B cell (primary cell): ENCODE measurements at regions of chr1 and their contacts with region 1.

Region 1: DNA sequence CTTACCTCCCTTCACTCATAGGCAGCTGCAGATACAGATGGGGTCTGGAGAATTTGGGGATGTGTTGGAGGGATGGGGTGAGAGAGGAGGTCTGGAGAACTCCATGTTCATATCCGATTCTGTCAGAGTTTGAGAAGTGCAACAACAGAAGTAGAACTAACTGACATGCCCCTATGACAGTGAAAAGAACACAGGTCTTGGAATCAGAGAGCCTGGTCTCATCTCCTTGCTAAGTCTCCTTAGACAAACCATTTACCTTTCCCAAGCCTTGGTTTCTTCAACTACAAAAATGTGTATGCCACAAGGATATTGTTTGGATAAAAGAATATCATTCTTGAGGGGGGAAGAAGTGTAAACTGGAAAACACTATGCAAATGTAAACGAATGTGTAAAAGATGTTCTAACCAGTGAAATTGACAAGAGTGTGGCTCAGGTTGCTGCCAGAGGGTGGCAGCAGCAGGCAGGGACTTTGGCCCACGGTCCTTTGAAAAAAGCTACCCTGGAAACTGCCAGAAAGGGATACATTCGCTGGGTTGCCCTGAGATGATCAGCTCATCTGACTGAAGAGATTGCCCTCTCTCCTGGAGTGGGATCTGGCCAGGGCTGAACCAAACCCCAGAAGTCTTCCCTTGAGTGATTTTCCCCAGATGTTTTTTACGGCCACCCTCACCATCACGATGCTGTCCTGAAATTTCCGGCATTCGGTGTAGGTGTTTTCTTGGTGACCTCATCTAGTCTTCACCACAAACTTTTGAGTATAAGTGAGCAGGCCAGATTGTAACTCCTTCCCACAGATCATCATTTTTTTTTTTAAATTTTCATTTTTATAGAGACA is 17.0 kb upstream of the CD2 start:
- DNase-seq: peak; percentile 68
- ATAC-seq: peak; percentile 60
- H3K4me3 ChIP-seq: no peak overlapping the region
- H3K4me3 Mint-ChIP-seq: peak overlapping the region; percentile 63
- H3K27ac ChIP-seq: no peak overlapping the region
- H3K27ac Mint-ChIP-seq: peak overlapping the region; percentile 66
- H3K4me1 ChIP-seq: peaks cover 20 to 24% of the 10 kb centered on the region in 2 donors
- H3K4me1 Mint-ChIP-seq: peaks cover 30% of the 10 kb centered on the region
- H3K27me3 ChIP-seq: no peaks in the 10 kb centered on the region
- H3K27me3 Mint-ChIP-seq: no peaks in the 10 kb centered on the region
- CTCF ChIP-seq: peak; percentile 74

Region 2: GRCh38 chr1:116472431-116472961 is 264.7 kb before region 1 on chr1:
- CTCF ChIA-PET with region 1: no interaction called
- POLR2A ChIA-PET with region 1: no interaction called
- intact Hi-C with region 1: no loop called
- DNase-seq: no peak
- ATAC-seq: no peak
- H3K4me3 ChIP-seq: no peak overlapping the region
- H3K4me3 Mint-ChIP-seq: no peak overlapping the region
- H3K27ac ChIP-seq: no peak overlapping the region
- H3K27ac Mint-ChIP-seq: no peak overlapping the region
- H3K4me1 ChIP-seq: no peaks in the 10 kb centered on the region
- H3K4me1 Mint-ChIP-seq: no peaks in the 10 kb centered on the region
- H3K27me3 ChIP-seq: no peaks in the 10 kb centered on the region
- H3K27me3 Mint-ChIP-seq: no peaks in the 10 kb centered on the region
- CTCF ChIP-seq: no peak

Region 3: DNA sequence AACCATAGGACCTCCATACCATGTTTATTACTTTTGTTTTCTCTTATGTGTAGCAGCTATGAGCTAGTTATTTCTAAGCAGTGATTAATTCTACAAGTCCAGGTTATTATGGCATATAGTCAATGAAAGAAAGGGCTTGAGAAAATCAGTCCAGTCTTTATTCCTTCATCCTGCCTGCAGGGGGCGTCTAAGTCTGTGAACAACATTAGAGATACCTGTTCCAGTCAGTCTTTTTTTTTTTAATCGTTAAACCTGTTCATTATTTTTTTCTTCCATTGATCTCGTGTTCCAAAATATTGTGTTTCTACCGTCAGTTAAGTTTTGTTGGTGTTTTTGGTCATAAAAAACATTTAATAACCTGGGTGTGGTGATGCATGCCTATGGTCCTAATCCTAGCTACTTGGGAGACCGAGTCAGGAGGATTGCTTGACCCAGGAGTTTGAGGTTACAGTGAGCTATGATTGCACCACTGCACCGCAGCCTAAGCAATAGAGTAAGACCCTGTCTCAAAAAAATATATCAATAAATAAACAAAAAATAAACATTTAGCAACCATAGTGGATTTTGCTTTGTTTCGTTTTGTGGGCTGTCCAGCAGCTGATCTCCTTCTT is 12.4 kb before region 1 on chr1:
- CTCF ChIA-PET with region 1: interaction called, 12 read pairs
- POLR2A ChIA-PET with region 1: interaction called, 6 read pairs
- intact Hi-C with region 1: no loop called
- DNase-seq: peak; percentile 67
- ATAC-seq: no peak
- H3K4me3 ChIP-seq: no peak overlapping the region
- H3K4me3 Mint-ChIP-seq: no peak overlapping the region
- H3K27ac ChIP-seq: no peak overlapping the region
- H3K27ac Mint-ChIP-seq: no peak overlapping the region
- H3K4me1 ChIP-seq: no peaks in the 10 kb centered on the region
- H3K4me1 Mint-ChIP-seq: peaks cover 7% of the 10 kb centered on the region
- H3K27me3 ChIP-seq: no peaks in the 10 kb centered on the region
- H3K27me3 Mint-ChIP-seq: no peaks in the 10 kb centered on the region
- CTCF ChIP-seq: peak; percentile 89

Region 4: GRCh38 chr1:116817582-116818064 is 80.4 kb after region 1 on chr1:
- CTCF ChIA-PET with region 1: interaction called, 32 read pairs
- POLR2A ChIA-PET with region 1: no interaction called
- intact Hi-C with region 1: loop called (anchors 1 kb)
- DNase-seq: peak; percentile 58
- ATAC-seq: peak; percentile 45
- H3K4me3 ChIP-seq: no peak overlapping the region
- H3K4me3 Mint-ChIP-seq: no peak overlapping the region
- H3K27ac ChIP-seq: no peak overlapping the region
- H3K27ac Mint-ChIP-seq: no peak overlapping the region
- H3K4me1 ChIP-seq: peaks cover 2 to 4% of the 10 kb centered on the region in 2 donors
- H3K4me1 Mint-ChIP-seq: peaks cover 2% of the 10 kb centered on the region
- H3K27me3 ChIP-seq: no peaks in the 10 kb centered on the region
- H3K27me3 Mint-ChIP-seq: no peaks in the 10 kb centered on the region
- CTCF ChIP-seq: peak; percentile 58

Region 5: GRCh38 chr1:117051224-117052064 is 314.2 kb after region 1 on chr1:
- CTCF ChIA-PET with region 1: interaction called, 64 read pairs
- POLR2A ChIA-PET with region 1: no interaction called
- intact Hi-C with region 1: loop called (anchors 1 kb)
- DNase-seq: peak; percentile 52
- ATAC-seq: peak; percentile 31
- H3K4me3 ChIP-seq: peak overlapping the region in 3 of 5 experiments; percentile 8 to 47 (median 28)
- H3K4me3 Mint-ChIP-seq: peak overlapping the region; percentile 79
- H3K27ac ChIP-seq: peak overlapping the region; percentile 37 to 64
- H3K27ac Mint-ChIP-seq: peak overlapping the region; percentile 88
- H3K4me1 ChIP-seq: peaks cover 45 to 46% of the 10 kb centered on the region in 2 donors
- H3K4me1 Mint-ChIP-seq: peaks cover 43% of the 10 kb centered on the region
- H3K27me3 ChIP-seq: no peaks in the 10 kb centered on the region
- H3K27me3 Mint-ChIP-seq: no peaks in the 10 kb centered on the region
- CTCF ChIP-seq: no peak

Region 6: GRCh38 chr1:117121776-117122697 is 384.8 kb after region 1 on chr1:
- CTCF ChIA-PET with region 1: interaction called, 3 read pairs
- POLR2A ChIA-PET with region 1: no interaction called
- intact Hi-C with region 1: loop called (anchors 2 kb)
- DNase-seq: peak; percentile 88
- ATAC-seq: peak; percentile 87
- H3K4me3 ChIP-seq: peak overlapping the region; percentile 72 to 88 (median 80)
- H3K4me3 Mint-ChIP-seq: peak overlapping the region; percentile 92
- H3K27ac ChIP-seq: peak overlapping the region in 1 of 2 donors; percentile 32
- H3K27ac Mint-ChIP-seq: peak overlapping the region; percentile 69
- H3K4me1 ChIP-seq: peaks cover 9 to 15% of the 10 kb centered on the region in 2 donors
- H3K4me1 Mint-ChIP-seq: peaks cover 7% of the 10 kb centered on the region
- H3K27me3 ChIP-seq: peaks cover 0 to 13% (median 3%) of the 10 kb centered on the region in 4 experiments
- H3K27me3 Mint-ChIP-seq: peaks cover 6% of the 10 kb centered on the region
- CTCF ChIP-seq: peak; percentile 72

Region 7: GRCh38 chr1:117128323-117129079 is 391.3 kb after region 1 on chr1:
- CTCF ChIA-PET with region 1: interaction called, 11 read pairs
- POLR2A ChIA-PET with region 1: no interaction called
- intact Hi-C with region 1: loop called (anchors 2 kb)
- DNase-seq: peak; percentile 32
- ATAC-seq: no peak
- H3K4me3 ChIP-seq: no peak overlapping the region
- H3K4me3 Mint-ChIP-seq: no peak overlapping the region
- H3K27ac ChIP-seq: no peak overlapping the region
- H3K27ac Mint-ChIP-seq: no peak overlapping the region
- H3K4me1 ChIP-seq: no peaks in the 10 kb centered on the region
- H3K4me1 Mint-ChIP-seq: no peaks in the 10 kb centered on the region
- H3K27me3 ChIP-seq: peaks cover 0 to 13% (median 5%) of the 10 kb centered on the region in 4 experiments
- H3K27me3 Mint-ChIP-seq: peaks cover 14% of the 10 kb centered on the region
- CTCF ChIP-seq: peak; percentile 72